Activated T-helper 1 cell treated with anti-CD3 and anti-CD28 coated beads, Interleukin-12 subunit alpha, Interleukin-12 subunit beta, Interleukin-2, Interleukin-4 antibody, amounts not matched to agents 30 ng/mL and 10 ng/mL and 1 ng/mL, durations not matched to agents 14 hours and 24 hours and 36 hours (primary cell): ENCODE measurements at regions of chr12 and their contacts with region 1.

Region 1: DNA sequence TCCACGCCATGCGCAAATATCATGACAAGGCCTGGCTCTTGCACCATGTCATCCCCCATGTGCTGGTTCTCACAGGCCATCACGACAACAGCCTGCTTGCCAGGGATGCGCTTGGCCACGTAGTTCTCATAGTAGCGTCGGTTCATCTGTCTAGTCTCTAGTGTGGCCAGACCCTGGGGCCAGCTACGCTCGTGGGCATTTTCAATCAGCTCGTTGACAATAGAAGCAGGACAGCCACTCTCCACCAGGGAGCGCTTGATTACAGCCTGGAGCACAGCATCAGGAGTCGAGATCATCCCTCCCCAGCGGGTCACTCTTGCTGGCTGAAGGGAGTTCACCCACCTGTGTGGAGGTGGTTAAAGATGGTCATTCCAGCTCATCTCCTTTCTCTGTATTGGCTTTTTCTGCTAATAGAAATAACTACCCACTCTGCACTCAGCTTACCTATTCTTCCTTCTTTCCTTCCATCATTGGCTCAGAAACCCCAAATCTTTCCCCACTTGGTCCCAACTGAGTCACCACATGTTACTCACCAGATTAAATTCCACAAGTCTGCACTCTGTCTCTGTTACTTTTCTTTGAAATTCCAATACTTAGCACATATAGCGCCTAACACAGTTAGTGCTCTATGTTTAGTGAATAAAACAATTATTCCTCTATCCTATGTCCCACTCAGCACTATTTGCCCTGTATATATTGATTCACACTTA is 15.1 kb downstream of the RNF41 start:
- DNase-seq: no peak
- H3K4me3 Mint-ChIP-seq: no peak overlapping the region
- H3K27ac Mint-ChIP-seq: no peak overlapping the region
- H3K4me1 Mint-ChIP-seq: no peaks in the 10 kb centered on the region
- H3K27me3 Mint-ChIP-seq: no peaks in the 10 kb centered on the region

Region 2: DNA sequence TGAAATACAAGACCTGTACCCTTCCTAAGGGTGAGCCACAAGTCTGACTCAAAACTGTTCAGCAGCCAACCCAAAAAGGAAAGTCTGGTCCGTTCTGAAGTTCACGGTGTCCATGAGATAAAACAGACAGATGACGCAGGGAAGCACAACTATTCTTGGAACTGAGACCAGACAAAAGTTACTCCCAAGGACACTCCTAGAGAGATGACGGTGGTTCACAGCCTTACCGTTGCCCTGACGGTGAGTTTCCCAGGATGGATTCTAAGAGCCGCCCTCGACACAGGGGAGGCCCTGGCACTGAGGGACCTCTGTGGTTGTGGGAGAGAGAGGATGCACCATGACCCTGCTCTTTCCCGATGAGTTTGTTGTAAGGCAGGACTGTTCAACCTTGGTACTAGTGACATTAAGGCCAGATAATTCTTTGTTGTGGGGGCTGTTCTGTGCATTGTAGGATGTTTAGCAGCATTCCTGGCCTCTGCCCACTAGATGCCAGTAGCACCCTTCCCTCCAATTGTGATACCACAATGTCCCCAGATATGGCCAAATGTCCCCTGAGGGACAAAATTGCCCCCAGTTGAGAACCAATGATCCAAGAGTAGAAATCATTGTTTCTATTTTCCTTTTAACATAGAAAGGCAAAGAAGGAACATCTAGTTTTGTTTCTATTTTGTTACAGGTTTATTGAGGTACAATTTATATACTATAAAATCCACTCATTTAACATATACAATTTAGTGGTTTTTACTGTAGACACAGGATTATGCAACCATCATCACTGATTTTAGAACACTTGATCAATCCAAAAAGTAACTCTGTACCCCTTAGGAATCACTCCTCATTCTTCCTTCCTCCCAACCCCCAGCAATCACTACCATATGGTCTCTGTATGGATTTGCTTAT is 546.9 kb before region 1 on chr12:
- intact Hi-C with region 1: no loop called
- DNase-seq: no peak
- H3K4me3 Mint-ChIP-seq: no peak overlapping the region
- H3K27ac Mint-ChIP-seq: no peak overlapping the region
- H3K4me1 Mint-ChIP-seq: no peaks in the 10 kb centered on the region
- H3K27me3 Mint-ChIP-seq: peaks cover 25% of the 10 kb centered on the region

Region 3: GRCh38 chr12:56189176-56189917 is 17.3 kb before region 1 on chr12 and contains the start of gene SMARCC2:
- intact Hi-C with region 1: no loop called
- DNase-seq: peak; percentile 85
- H3K4me3 Mint-ChIP-seq: peak within 1 kb of the TSS; percentile 95
- H3K27ac Mint-ChIP-seq: peak within 1 kb of the TSS; percentile 96
- H3K4me1 Mint-ChIP-seq: peaks cover 55% of the 10 kb centered on the region
- H3K27me3 Mint-ChIP-seq: peaks cover 2% of the 10 kb centered on the region
- total RNA-seq, gene SMARCC2: 124 and 132 TPM in 2 replicates

Region 4: GRCh38 chr12:56258057-56258819 is 51.6 kb after region 1 on chr12 and contains the start of gene ANKRD52:
- intact Hi-C with region 1: loop called (anchors 5 kb)
- DNase-seq: peak; percentile 82
- H3K4me3 Mint-ChIP-seq: peak within 1 kb of the TSS; percentile 90
- H3K27ac Mint-ChIP-seq: peak within 1 kb of the TSS; percentile 83
- H3K4me1 Mint-ChIP-seq: peaks cover 22% of the 10 kb centered on the region
- H3K27me3 Mint-ChIP-seq: no peaks in the 10 kb centered on the region
- total RNA-seq, gene ANKRD52: 71.0 and 83.9 TPM in 2 replicates